GM10248 (cell line): ENCODE measurements at regions of chr1 and their contacts with region 1.

Region 1: GRCh38 chr1:6489799-6490180 is 1.7 kb downstream of the PLEKHG5 start:
- DNase-seq: peak; percentile 93
- CTCF ChIP-seq: peak; percentile 97

Region 2: GRCh38 chr1:6273380-6273891 is 216.4 kb before region 1 on chr1:
- CTCF ChIA-PET with region 1: no interaction called
- POLR2A ChIA-PET with region 1: no interaction called
- DNase-seq: no peak
- CTCF ChIP-seq: no peak

Region 3: GRCh38 chr1:6523566-6523965 is 33.8 kb after region 1 on chr1:
- CTCF ChIA-PET with region 1: interaction called, 19 read pairs
- POLR2A ChIA-PET with region 1: no interaction called
- DNase-seq: no peak
- CTCF ChIP-seq: no peak

Region 4: GRCh38 chr1:6646499-6647148 is 156.8 kb after region 1 on chr1:
- CTCF ChIA-PET with region 1: interaction called, 123 read pairs
- POLR2A ChIA-PET with region 1: no interaction called
- DNase-seq: peak; percentile 63
- CTCF ChIP-seq: peak; percentile 37